ENCODE measurements at regions of chr10 and their contacts with region 1.

Region 1: GRCh38 chr10:15824498-15824897 is 35.8 kb downstream of the MINDY3 start:
- DNase-seq: no peak
- H3K4me3 Mint-ChIP-seq: no peak overlapping the region
- H3K27ac Mint-ChIP-seq: no peak overlapping the region
- H3K4me1 Mint-ChIP-seq: no peaks in the 10 kb centered on the region
- H3K27me3 Mint-ChIP-seq: no peaks in the 10 kb centered on the region
- CTCF ChIP-seq: peak; percentile 32

Region 2: DNA sequence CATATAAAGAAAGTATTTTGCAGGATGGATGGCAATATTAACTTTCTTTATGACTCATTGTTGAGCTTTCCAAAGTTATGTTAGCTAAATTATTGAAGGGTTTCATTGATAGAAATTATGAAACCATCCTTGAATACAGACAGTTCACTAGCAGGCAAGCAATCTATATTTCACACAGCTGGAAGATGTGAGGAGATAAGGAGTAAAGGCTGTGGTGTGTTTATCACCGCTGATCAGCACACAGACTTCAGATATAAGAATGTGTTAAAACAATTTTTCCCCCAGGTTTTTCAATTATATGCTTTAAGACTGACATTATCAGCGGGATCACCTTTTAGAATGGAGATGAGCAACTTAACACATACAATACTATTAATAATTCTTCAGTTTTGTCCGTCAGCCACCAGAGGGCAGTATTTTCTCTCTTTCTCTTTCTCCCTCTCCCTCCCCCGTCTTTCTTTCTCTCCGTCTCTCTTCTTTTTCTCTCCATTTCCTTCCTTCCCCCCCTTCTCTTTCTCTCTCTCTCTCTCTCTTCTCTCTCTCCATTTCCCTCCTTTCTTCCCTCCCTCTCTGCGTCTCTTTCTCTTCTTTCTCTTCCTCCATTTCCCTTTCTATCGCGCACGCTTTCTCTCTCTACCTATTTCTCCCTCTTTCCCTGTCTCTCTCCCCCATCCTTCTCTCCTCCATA is 390.5 kb before region 1 on chr10:
- CTCF ChIA-PET with region 1: no interaction called
- intact Hi-C with region 1: loop called (anchors 2 kb)
- DNase-seq: peak; percentile 58
- H3K4me3 Mint-ChIP-seq: peak overlapping the region; percentile 40
- H3K27ac Mint-ChIP-seq: no peak overlapping the region
- H3K4me1 Mint-ChIP-seq: no peaks in the 10 kb centered on the region
- H3K27me3 Mint-ChIP-seq: peaks cover 19% of the 10 kb centered on the region
- CTCF ChIP-seq: peak; percentile 77

Region 3: DNA sequence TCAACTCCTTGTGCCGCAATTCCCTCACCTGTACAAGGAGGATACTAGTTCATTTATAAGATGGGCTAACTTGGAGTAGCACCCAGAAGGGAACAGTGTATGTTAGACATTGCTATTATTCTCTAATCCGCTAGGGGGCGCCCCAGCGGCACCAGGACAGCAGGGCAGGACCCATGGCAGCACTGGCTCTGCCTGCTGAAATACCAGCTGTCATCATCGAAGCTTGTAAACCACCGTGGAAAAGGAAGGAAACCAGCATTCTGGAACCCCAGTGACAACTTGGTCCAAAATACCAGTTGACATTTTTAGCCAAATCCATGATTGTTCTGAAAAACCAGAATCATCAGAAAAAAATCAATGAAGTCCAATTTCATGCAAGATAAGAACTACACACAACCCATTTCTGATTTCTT is 239.2 kb before region 1 on chr10:
- CTCF ChIA-PET with region 1: no interaction called
- intact Hi-C with region 1: loop called (anchors 2 kb)
- DNase-seq: peak; percentile 52
- H3K4me3 Mint-ChIP-seq: no peak overlapping the region
- H3K27ac Mint-ChIP-seq: no peak overlapping the region
- H3K4me1 Mint-ChIP-seq: no peaks in the 10 kb centered on the region
- H3K27me3 Mint-ChIP-seq: peaks cover 14% of the 10 kb centered on the region
- CTCF ChIP-seq: peak; percentile 34

Region 4: DNA sequence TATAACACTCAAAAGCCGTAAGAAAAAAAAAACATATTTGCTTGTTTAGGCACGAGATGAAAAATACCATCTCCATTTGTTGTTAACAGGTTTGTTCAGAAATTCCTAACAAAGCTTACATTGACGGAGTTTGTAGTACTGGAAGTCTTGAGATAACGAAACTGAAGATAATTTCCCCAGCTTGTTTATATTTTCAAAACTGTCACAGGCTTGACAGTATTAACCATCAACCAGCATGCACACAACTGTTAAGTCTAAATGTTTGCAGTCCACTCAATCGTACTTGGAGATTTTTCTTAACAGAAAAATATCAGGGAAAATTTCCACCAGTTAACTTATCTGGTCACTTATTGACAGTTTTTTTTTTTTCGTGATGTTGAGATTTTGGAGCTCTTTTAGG is 173.3 kb before region 1 on chr10:
- CTCF ChIA-PET with region 1: no interaction called
- intact Hi-C with region 1: loop called (anchors 1 kb)
- DNase-seq: no peak
- H3K4me3 Mint-ChIP-seq: no peak overlapping the region
- H3K27ac Mint-ChIP-seq: no peak overlapping the region
- H3K4me1 Mint-ChIP-seq: no peaks in the 10 kb centered on the region
- H3K27me3 Mint-ChIP-seq: peaks cover 11% of the 10 kb centered on the region
- CTCF ChIP-seq: no peak

Region 5: GRCh38 chr10:15725603-15726002 is 98.9 kb before region 1 on chr10:
- CTCF ChIA-PET with region 1: no interaction called
- intact Hi-C with region 1: loop called (anchors 2 kb)
- DNase-seq: peak; percentile 25
- H3K4me3 Mint-ChIP-seq: no peak overlapping the region
- H3K27ac Mint-ChIP-seq: no peak overlapping the region
- H3K4me1 Mint-ChIP-seq: no peaks in the 10 kb centered on the region
- H3K27me3 Mint-ChIP-seq: peaks cover 14% of the 10 kb centered on the region
- CTCF ChIP-seq: peak; percentile 41

Region 6: GRCh38 chr10:15744217-15744865 is 80.2 kb before region 1 on chr10:
- CTCF ChIA-PET with region 1: no interaction called
- intact Hi-C with region 1: loop called (anchors 5 kb)
- DNase-seq: peak; percentile 48
- H3K4me3 Mint-ChIP-seq: no peak overlapping the region
- H3K27ac Mint-ChIP-seq: no peak overlapping the region
- H3K4me1 Mint-ChIP-seq: peaks cover 9% of the 10 kb centered on the region
- H3K27me3 Mint-ChIP-seq: no peaks in the 10 kb centered on the region
- CTCF ChIP-seq: peak; percentile 56

Region 7: GRCh38 chr10:15842556-15843169 is 18.2 kb after region 1 on chr10:
- CTCF ChIA-PET with region 1: interaction called, 12 read pairs
- intact Hi-C with region 1: no loop called
- DNase-seq: no peak
- H3K4me3 Mint-ChIP-seq: no peak overlapping the region
- H3K27ac Mint-ChIP-seq: no peak overlapping the region
- H3K4me1 Mint-ChIP-seq: no peaks in the 10 kb centered on the region
- H3K27me3 Mint-ChIP-seq: no peaks in the 10 kb centered on the region
- CTCF ChIP-seq: no peak

Measured in Calu3 (cell line).